ENCODE measurements at regions of chr17 and their contacts with region 1.

Region 1: GRCh38 chr17:55601874-55602364 is 90.7 kb upstream of the SMIM36 start:
- DNase-seq: peak; percentile 69
- H3K4me3 ChIP-seq: no peak overlapping the region
- H3K27ac ChIP-seq: no peak overlapping the region
- H3K4me1 ChIP-seq: no peaks in the 10 kb centered on the region
- H3K27me3 ChIP-seq: peaks cover 0 to 3% of the 10 kb centered on the region in 2 experiments
- CTCF ChIP-seq: peak; percentile 71 to 72
- POLR2A ChIP-seq: no peak

Region 2: GRCh38 chr17:55314784-55315491 is 287.0 kb before region 1 on chr17:
- CTCF ChIA-PET with region 1: no interaction called
- POLR2A ChIA-PET with region 1: no interaction called
- dilution Hi-C with region 1: no loop called
- intact Hi-C with region 1: no loop called
- DNase-seq: no peak
- H3K4me3 ChIP-seq: no peak overlapping the region
- H3K27ac ChIP-seq: no peak overlapping the region
- H3K4me1 ChIP-seq: no peaks in the 10 kb centered on the region
- H3K27me3 ChIP-seq: no peaks in the 10 kb centered on the region
- CTCF ChIP-seq: no peak
- POLR2A ChIP-seq: no peak

Region 3: GRCh38 chr17:55513885-55514591 is 87.9 kb before region 1 on chr17:
- CTCF ChIA-PET with region 1: interaction called, 12 read pairs
- POLR2A ChIA-PET with region 1: no interaction called
- dilution Hi-C with region 1: no loop called
- intact Hi-C with region 1: no loop called
- DNase-seq: peak; percentile 73
- H3K4me3 ChIP-seq: no peak overlapping the region
- H3K27ac ChIP-seq: no peak overlapping the region
- H3K4me1 ChIP-seq: no peaks in the 10 kb centered on the region
- H3K27me3 ChIP-seq: peaks cover 1 to 19% of the 10 kb centered on the region in 2 experiments
- CTCF ChIP-seq: peak; percentile 77 to 82
- POLR2A ChIP-seq: no peak

Region 4: GRCh38 chr17:55540414-55541091 is 61.4 kb before region 1 on chr17:
- CTCF ChIA-PET with region 1: interaction called, 10 read pairs
- POLR2A ChIA-PET with region 1: no interaction called
- dilution Hi-C with region 1: no loop called
- intact Hi-C with region 1: no loop called
- DNase-seq: peak; percentile 73
- H3K4me3 ChIP-seq: no peak overlapping the region
- H3K27ac ChIP-seq: no peak overlapping the region
- H3K4me1 ChIP-seq: peaks cover 31% of the 10 kb centered on the region
- H3K27me3 ChIP-seq: no peaks in the 10 kb centered on the region
- CTCF ChIP-seq: no peak
- POLR2A ChIP-seq: no peak

Region 5: GRCh38 chr17:55576996-55577586 is 24.8 kb before region 1 on chr17:
- CTCF ChIA-PET with region 1: interaction called, 22 read pairs
- POLR2A ChIA-PET with region 1: no interaction called
- dilution Hi-C with region 1: no loop called
- intact Hi-C with region 1: no loop called
- DNase-seq: peak; percentile 61
- H3K4me3 ChIP-seq: peak overlapping the region in 1 of 3 experiments; percentile 24
- H3K27ac ChIP-seq: peak overlapping the region; percentile 66
- H3K4me1 ChIP-seq: peaks cover 14% of the 10 kb centered on the region
- H3K27me3 ChIP-seq: no peaks in the 10 kb centered on the region
- CTCF ChIP-seq: no peak
- POLR2A ChIP-seq: no peak

Region 6: DNA sequence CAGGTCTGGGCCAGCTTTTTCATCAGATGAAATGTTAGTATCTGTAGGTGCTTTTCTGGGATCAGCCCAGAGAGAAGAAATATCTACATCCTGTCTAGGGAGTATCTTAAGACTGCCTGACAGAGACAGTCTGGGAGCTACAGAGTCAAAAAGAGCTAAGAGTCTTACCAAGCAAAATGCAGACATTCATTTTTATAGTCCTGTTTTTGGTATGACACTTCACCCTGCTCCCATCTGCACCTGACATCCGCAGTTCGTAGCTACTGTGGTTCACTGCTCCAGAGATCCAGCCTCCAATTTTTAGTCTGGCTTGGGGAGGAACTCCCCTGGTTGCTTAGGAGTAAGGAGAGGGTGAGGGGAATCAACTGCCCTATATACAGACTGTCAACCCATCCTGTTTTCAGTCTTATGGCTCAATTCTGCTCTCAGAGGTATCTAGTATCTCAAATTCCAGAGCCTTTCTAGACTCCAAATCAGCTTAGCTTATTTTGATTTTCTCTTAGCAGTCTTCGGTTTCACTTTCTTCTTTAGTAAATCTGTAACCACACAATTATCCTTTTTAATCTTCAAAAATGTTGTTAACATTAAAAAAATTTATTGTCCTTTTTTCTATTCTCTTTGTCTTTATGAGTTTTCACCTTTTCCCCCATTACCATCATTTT is 23.0 kb after region 1 on chr17:
- CTCF ChIA-PET with region 1: interaction called, 79 read pairs
- POLR2A ChIA-PET with region 1: no interaction called
- dilution Hi-C with region 1: no loop called
- intact Hi-C with region 1: no loop called
- DNase-seq: no peak
- H3K4me3 ChIP-seq: no peak overlapping the region
- H3K27ac ChIP-seq: no peak overlapping the region
- H3K4me1 ChIP-seq: peaks cover 4% of the 10 kb centered on the region
- H3K27me3 ChIP-seq: no peaks in the 10 kb centered on the region
- CTCF ChIP-seq: no peak
- POLR2A ChIP-seq: no peak

Region 7: GRCh38 chr17:55735731-55736405 is 133.9 kb after region 1 on chr17:
- CTCF ChIA-PET with region 1: interaction called, 15 read pairs
- POLR2A ChIA-PET with region 1: no interaction called
- dilution Hi-C with region 1: no loop called
- intact Hi-C with region 1: no loop called
- DNase-seq: peak; percentile 32
- H3K4me3 ChIP-seq: no peak overlapping the region
- H3K27ac ChIP-seq: no peak overlapping the region
- H3K4me1 ChIP-seq: no peaks in the 10 kb centered on the region
- H3K27me3 ChIP-seq: no peaks in the 10 kb centered on the region
- CTCF ChIP-seq: peak; percentile 44 to 54
- POLR2A ChIP-seq: no peak

Region 8: GRCh38 chr17:55825213-55825612 is 223.3 kb after region 1 on chr17:
- CTCF ChIA-PET with region 1: interaction called, 4 read pairs
- POLR2A ChIA-PET with region 1: no interaction called
- dilution Hi-C with region 1: no loop called
- intact Hi-C with region 1: loop called (anchors 5 kb)
- DNase-seq: peak; percentile 8
- H3K4me3 ChIP-seq: no peak overlapping the region
- H3K27ac ChIP-seq: no peak overlapping the region
- H3K4me1 ChIP-seq: no peaks in the 10 kb centered on the region
- H3K27me3 ChIP-seq: no peaks in the 10 kb centered on the region
- CTCF ChIP-seq: peak; percentile 7 to 10
- POLR2A ChIP-seq: no peak

Measured in endothelial cell of umbilical vein (primary cell).